Activated CD8-positive, alpha-beta T cell treated with anti-CD3 and anti-CD28 coated beads, Interleukin-2, amount 10 ng/mL, durations not matched to agents 7 days and 5 days (primary cell): ENCODE measurements at regions of chr7 and their contacts with region 1.

Region 1: GRCh38 chr7:141737834-141738591 is at the start of gene SSBP1:
- DNase-seq: peak; percentile 95
- ATAC-seq: peak; percentile 90
- H3K4me3 Mint-ChIP-seq: peak within 1 kb of the TSS; percentile 94
- H3K27ac Mint-ChIP-seq: peak within 1 kb of the TSS; percentile 99
- H3K4me1 Mint-ChIP-seq: peaks cover 31% of the 10 kb centered on the region
- H3K27me3 Mint-ChIP-seq: no peaks in the 10 kb centered on the region
- total RNA-seq, gene SSBP1: 138 to 140 TPM

Region 2: GRCh38 chr7:141184532-141185190 is 553.4 kb before region 1 on chr7:
- CTCF ChIA-PET with region 1: no interaction called
- POLR2A ChIA-PET with region 1: no interaction called
- DNase-seq: no peak
- ATAC-seq: no peak
- H3K4me3 Mint-ChIP-seq: no peak overlapping the region
- H3K27ac Mint-ChIP-seq: no peak overlapping the region
- H3K4me1 Mint-ChIP-seq: no peaks in the 10 kb centered on the region
- H3K27me3 Mint-ChIP-seq: no peaks in the 10 kb centered on the region

Region 3: GRCh38 chr7:141477865-141478264 is 260.1 kb before region 1 on chr7:
- CTCF ChIA-PET with region 1: no interaction called
- POLR2A ChIA-PET with region 1: no interaction called
- DNase-seq: no peak
- ATAC-seq: no peak
- H3K4me3 Mint-ChIP-seq: no peak overlapping the region
- H3K27ac Mint-ChIP-seq: no peak overlapping the region
- H3K4me1 Mint-ChIP-seq: no peaks in the 10 kb centered on the region
- H3K27me3 Mint-ChIP-seq: peaks cover 12% of the 10 kb centered on the region

Region 4: DNA sequence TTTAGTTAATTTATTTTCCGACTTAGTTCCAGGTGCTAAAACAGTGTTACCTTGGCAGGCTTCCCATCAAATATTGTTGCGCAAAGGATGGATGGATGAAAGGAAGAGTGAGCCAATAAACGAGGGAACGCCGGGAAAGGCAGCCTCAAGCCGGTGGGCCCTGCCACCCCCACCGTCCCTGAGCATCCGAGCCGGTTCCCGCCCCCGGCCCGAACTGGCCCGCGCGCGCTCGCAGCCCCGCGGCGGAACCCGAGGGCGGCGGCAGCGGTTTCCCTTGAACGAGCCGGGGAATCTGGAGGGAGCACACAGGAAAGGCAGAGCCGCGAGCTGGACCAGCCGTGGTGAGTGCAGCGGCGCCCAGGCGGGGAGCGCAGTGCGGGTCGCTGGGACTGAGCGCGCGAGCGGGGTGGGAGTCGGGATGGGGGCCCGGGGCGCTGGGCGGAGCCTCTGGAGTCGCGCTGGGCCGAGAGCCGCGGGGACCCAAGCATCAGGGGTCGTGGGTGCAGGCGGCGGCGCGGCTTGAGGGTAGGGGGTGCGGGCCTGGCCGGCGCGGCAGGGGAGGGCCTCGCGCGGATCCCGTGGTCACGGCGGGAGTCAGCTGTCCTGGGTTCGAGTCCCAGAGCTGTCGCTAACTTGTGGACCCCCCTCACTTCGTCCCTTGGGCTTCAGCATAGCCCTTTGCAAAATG is 186.8 kb before region 1 on chr7 and contains the start of gene AGK:
- CTCF ChIA-PET with region 1: interaction called, 11 read pairs
- POLR2A ChIA-PET with region 1: interaction called, 5 read pairs
- DNase-seq: peak; percentile 81
- ATAC-seq: peak; percentile 98
- H3K4me3 Mint-ChIP-seq: peak within 1 kb of the TSS; percentile 91
- H3K27ac Mint-ChIP-seq: peak within 1 kb of the TSS; percentile 90
- H3K4me1 Mint-ChIP-seq: peaks cover 29% of the 10 kb centered on the region
- H3K27me3 Mint-ChIP-seq: no peaks in the 10 kb centered on the region
- total RNA-seq, gene AGK: 41.0 to 41.2 TPM

Region 5: DNA sequence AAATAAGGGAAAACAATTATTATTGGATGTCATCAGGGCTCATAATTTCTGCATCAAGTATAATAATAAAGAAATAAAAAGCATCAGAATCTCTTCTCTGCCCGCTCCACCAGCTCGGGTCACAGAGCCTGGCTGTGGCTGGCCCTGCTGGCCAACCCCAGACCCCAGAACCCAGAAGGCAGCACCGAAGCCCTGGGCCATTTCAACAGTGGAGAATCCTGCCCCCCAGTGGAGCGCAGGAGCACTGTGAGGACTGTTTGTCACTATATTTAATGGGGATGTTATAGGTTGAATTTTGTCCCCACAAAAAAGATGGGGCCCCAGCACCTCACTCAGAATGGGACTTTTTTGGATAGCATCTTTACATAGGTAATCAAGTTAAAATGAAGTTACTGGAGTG is 63.3 kb before region 1 on chr7:
- CTCF ChIA-PET with region 1: interaction called, 13 read pairs
- POLR2A ChIA-PET with region 1: interaction called, 6 read pairs
- DNase-seq: no peak
- ATAC-seq: peak; percentile 60
- H3K4me3 Mint-ChIP-seq: no peak overlapping the region
- H3K27ac Mint-ChIP-seq: no peak overlapping the region
- H3K4me1 Mint-ChIP-seq: peaks cover 18% of the 10 kb centered on the region
- H3K27me3 Mint-ChIP-seq: no peaks in the 10 kb centered on the region

Region 6: DNA sequence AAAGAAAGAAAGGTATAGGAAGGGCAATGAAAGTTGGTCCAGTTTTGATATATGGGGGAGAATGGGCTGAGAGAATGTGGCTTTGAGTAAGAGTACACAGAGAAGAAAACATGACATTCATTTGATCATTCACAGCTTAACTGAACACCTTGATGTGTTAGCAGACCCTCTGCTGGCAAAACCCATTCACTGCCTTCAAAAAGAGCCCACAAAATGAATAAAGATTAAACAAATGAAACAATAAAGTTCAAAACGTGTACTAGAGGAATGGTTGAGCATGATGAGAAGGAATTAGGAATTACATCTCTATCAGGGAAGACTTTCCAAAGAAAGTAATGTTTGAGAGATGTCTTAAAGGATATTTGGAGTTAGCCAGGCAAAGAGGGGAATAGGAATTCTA is 27.7 kb before region 1 on chr7:
- CTCF ChIA-PET with region 1: interaction called, 17 read pairs
- POLR2A ChIA-PET with region 1: no interaction called
- DNase-seq: no peak
- ATAC-seq: no peak
- H3K4me3 Mint-ChIP-seq: no peak overlapping the region
- H3K27ac Mint-ChIP-seq: no peak overlapping the region
- H3K4me1 Mint-ChIP-seq: peaks cover 7% of the 10 kb centered on the region
- H3K27me3 Mint-ChIP-seq: peaks cover 9% of the 10 kb centered on the region